ENCODE measurements at regions of chr20 and their contacts with region 1.

Region 1: GRCh38 chr20:35146920-35147574 is at the start of gene EDEM2:
- DNase-seq: peak; percentile 92 to 95 (median 93)
- H3K4me3 ChIP-seq: peak within 1 kb of the TSS; percentile 93
- H3K4me3 Mint-ChIP-seq: peak within 1 kb of the TSS; percentile 90 to 99 (median 99)
- H3K27ac ChIP-seq: peak within 1 kb of the TSS; percentile 62
- H3K27ac Mint-ChIP-seq: peak within 1 kb of the TSS; percentile 76 to 99 (median 97)
- H3K4me1 ChIP-seq: peaks cover 17% of the 10 kb centered on the region
- H3K4me1 Mint-ChIP-seq: peaks cover 36 to 46% (median 44%) of the 10 kb centered on the region in 3 donors
- H3K27me3 ChIP-seq: no peaks in the 10 kb centered on the region
- H3K27me3 Mint-ChIP-seq: no peaks in the 10 kb centered on the region
- total RNA-seq, gene EDEM2: 19.3 to 20.1 TPM

Region 2: DNA sequence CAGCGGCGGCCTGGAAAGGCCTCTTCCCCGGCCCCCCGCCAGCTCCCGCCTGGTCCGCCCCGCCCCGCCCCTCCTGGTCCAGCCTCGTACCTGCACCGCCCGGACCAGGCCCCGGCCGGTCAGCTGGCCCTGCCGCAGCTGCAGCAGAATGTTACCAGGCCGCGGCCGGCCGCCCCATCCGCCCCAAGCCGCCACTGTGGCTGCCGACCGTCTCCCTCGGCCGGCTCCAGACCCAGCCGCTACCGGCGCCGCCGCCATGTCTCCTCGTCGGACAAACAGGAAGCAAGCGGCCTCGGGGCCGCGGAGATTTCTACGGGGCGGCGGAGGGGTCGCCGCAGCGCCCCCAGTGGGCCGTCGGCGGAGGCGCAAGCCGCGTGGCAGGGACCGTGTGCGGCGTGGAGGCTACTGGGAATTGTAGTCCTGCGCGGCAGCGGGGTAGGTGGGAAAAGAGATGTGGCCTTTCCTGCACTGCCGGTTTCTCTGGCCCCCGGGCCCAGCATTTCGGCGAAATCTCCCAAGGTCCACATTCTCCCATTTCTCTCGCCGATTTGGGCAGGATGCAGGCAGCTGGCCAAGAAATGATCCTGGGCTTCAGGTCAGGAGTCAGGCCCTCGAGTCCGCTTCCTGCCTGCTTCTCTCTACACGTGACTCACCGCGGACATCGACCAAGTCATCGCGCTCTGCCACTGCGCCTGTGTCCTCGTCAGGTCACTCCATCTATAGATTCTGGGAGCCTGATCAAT is 54.4 kb before region 1 on chr20 and contains the start of gene TRPC4AP:
- CTCF ChIA-PET with region 1: interaction called, 44 read pairs
- POLR2A ChIA-PET with region 1: interaction called, 5 read pairs
- DNase-seq: peak; percentile 81 to 90 (median 85)
- H3K4me3 ChIP-seq: peak within 1 kb of the TSS; percentile 91
- H3K4me3 Mint-ChIP-seq: peak within 1 kb of the TSS; percentile 87 to 94 (median 91)
- H3K27ac ChIP-seq: peak within 1 kb of the TSS; percentile 78
- H3K27ac Mint-ChIP-seq: peak within 1 kb of the TSS; percentile 79 to 97 (median 95)
- H3K4me1 ChIP-seq: peaks cover 23% of the 10 kb centered on the region
- H3K4me1 Mint-ChIP-seq: peaks cover 44 to 62% (median 54%) of the 10 kb centered on the region in 3 donors
- H3K27me3 ChIP-seq: no peaks in the 10 kb centered on the region
- H3K27me3 Mint-ChIP-seq: peaks cover 0 to 1% of the 10 kb centered on the region in 2 donors
- total RNA-seq, gene TRPC4AP: 51.2 to 53.4 TPM

Region 3: DNA sequence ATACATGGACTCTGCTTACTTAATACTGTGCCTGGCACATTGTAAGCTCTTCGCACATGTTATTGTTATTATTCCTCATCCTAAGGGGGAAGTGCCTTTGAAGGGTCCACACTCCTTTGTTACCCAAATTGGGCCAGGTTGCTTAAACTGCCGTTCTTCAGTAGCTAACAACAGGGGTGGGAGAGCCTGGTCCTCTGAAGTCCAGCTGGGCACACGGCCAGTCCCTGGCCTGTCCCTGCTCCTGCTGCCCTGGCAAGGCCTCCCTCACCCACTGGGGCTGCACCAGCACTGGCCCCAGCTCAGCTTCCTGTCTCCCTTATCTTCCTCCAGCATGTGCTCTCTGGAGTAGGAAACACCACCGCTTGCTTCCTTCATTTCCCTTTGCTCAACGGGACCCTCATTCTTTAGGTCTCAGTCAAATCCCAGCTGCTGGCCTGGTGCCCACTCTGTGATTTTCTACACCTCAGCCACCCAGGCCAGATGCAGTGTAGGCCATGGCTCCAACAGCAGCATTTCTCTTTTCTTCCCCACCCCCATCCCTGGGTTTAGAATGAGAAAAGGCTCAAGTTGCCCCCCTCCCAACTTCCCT is 19.3 kb after region 1 on chr20:
- CTCF ChIA-PET with region 1: interaction called, 12 read pairs
- POLR2A ChIA-PET with region 1: interaction called, 9 read pairs
- DNase-seq: no peak
- H3K4me3 ChIP-seq: no peak overlapping the region
- H3K4me3 Mint-ChIP-seq: no peak overlapping the region
- H3K27ac ChIP-seq: no peak overlapping the region
- H3K27ac Mint-ChIP-seq: peak overlapping the region in 1 of 8 donors; percentile 84
- H3K4me1 ChIP-seq: peaks cover 6% of the 10 kb centered on the region
- H3K4me1 Mint-ChIP-seq: peaks cover 20 to 26% (median 20%) of the 10 kb centered on the region in 3 donors
- H3K27me3 ChIP-seq: no peaks in the 10 kb centered on the region
- H3K27me3 Mint-ChIP-seq: peaks cover 0 to 1% of the 10 kb centered on the region in 2 donors

Region 4: DNA sequence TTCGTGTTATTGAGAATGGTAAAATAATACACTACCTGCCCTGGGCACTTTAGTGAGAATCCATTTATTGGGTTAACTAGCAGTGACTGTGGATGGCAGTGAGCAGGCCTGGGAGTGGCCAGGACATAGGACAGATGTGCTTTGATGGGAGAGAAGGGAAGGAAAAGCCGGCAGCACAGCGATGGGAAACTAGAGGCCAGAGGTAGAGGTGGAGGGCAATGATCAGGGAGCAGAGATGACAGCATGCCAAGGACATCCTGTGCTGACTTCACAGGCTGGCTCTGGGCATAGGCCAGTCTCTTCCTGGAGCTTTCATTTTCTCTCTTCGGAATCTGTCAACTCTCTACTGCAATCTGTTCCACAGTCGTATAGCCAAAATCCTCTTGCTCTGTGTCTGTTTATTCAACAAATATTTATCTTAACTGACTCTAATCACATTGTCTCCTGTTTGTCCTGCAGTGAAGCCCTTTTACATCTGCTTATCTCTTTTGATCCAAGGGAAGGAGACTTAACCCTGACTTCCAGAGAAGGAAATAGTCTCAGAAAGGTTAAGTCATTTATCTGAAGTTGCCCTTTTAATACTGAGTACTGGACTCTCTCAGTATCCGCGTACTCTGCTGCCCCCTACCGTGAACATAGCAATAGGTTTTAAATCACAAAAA is 61.0 kb after region 1 on chr20:
- CTCF ChIA-PET with region 1: interaction called, 72 read pairs
- POLR2A ChIA-PET with region 1: no interaction called
- DNase-seq: peak; percentile 62 to 83 (median 69)
- H3K4me3 ChIP-seq: no peak overlapping the region
- H3K4me3 Mint-ChIP-seq: no peak overlapping the region
- H3K27ac ChIP-seq: no peak overlapping the region
- H3K27ac Mint-ChIP-seq: no peak overlapping the region
- H3K4me1 ChIP-seq: no peaks in the 10 kb centered on the region
- H3K4me1 Mint-ChIP-seq: no peaks in the 10 kb centered on the region
- H3K27me3 ChIP-seq: no peaks in the 10 kb centered on the region
- H3K27me3 Mint-ChIP-seq: no peaks in the 10 kb centered on the region

Region 5: DNA sequence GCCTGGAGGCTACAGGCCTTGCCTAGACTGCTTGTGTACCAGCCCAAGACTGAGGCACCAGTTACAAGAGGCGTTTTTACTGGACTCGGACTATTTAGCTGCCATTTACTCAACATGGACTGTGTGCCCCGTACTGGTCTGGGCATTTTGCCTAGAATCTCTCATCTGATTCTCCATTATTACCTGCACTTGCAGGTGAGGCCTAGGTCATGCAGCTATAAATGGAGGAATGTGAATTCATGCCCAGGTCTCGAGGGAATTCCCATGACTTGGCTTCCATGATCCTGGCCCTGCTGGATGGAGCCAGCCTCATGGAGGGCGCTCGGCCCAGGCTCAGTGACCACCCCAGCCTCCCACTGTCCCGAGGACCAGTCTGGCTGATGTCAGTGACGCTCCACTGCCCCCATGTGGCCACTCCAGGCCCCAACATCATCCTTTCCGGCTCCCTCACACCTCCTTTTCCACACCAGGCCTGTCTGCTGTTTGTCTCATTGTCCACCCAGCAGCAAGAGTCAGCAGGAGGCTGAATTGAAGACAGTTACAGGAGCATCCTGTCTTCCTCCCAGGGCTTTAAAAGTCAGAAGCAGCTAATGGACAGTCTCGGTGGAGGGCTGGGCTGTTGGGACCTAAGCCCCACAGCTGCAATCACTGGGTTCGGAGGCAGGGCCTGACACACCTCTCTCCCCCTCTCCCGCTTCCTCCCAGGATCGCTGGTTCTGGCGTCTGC is 122.2 kb after region 1 on chr20:
- CTCF ChIA-PET with region 1: interaction called, 18 read pairs
- POLR2A ChIA-PET with region 1: no interaction called
- DNase-seq: peak; percentile 22 to 64 (median 35)
- H3K4me3 ChIP-seq: no peak overlapping the region
- H3K4me3 Mint-ChIP-seq: peak overlapping the region in 1 of 7 donors; percentile 14
- H3K27ac ChIP-seq: no peak overlapping the region
- H3K27ac Mint-ChIP-seq: peak overlapping the region in 7 of 8 donors; percentile 12 to 93 (median 57)
- H3K4me1 ChIP-seq: no peaks in the 10 kb centered on the region
- H3K4me1 Mint-ChIP-seq: peaks cover 5 to 20% (median 19%) of the 10 kb centered on the region in 3 donors
- H3K27me3 ChIP-seq: no peaks in the 10 kb centered on the region
- H3K27me3 Mint-ChIP-seq: no peaks in the 10 kb centered on the region

Measured in CD8-positive, alpha-beta memory T cell (primary cell).